ENCODE measurements at regions of chr3 and their contacts with region 1.

Region 1: DNA sequence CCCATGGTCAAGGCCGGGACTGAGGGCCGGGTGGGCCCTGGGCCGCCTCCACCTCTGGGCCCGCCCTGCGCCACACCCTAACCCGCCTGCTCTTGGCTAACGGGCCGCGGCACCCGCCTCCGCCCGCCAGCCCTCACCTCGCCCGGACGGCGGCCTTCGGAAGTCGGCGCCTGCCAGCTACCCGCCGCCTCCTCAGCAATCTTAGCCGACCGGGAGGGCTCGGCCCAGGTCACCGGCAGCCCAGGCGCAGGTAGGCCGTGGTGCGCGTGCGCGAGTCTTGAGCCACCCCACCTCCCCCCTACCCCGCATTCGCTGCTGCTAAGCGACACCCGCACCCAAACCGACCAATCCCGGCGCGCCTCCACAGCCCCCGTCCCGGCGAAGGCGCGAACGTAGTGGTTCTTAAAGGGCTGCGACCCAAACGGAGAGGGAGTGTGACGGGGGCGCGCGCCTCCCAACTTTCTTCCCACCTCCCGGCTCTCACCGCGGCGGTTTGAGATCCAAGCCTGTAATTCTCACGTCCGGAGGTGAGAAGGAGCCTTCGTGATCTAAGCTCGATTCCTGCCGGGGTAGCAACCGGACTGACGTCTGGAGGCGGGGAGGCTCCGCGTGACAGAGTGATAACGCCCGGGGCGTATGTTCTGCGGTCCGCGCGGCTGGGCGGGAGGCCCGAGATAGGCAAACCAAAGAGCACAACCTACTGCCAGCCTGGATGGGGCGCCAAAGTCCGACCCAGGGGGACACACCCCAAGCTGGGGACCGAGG is at the start of gene SEC22C:
- DNase-seq: peak; percentile 93
- H3K4me3 Mint-ChIP-seq: peak within 1 kb of the TSS; percentile 93
- H3K27ac Mint-ChIP-seq: peak within 1 kb of the TSS; percentile 90
- H3K4me1 Mint-ChIP-seq: peaks cover 47% of the 10 kb centered on the region
- H3K27me3 Mint-ChIP-seq: no peaks in the 10 kb centered on the region
- total RNA-seq, gene SEC22C: 36.1 and 40.1 TPM in 2 replicates

Region 2: DNA sequence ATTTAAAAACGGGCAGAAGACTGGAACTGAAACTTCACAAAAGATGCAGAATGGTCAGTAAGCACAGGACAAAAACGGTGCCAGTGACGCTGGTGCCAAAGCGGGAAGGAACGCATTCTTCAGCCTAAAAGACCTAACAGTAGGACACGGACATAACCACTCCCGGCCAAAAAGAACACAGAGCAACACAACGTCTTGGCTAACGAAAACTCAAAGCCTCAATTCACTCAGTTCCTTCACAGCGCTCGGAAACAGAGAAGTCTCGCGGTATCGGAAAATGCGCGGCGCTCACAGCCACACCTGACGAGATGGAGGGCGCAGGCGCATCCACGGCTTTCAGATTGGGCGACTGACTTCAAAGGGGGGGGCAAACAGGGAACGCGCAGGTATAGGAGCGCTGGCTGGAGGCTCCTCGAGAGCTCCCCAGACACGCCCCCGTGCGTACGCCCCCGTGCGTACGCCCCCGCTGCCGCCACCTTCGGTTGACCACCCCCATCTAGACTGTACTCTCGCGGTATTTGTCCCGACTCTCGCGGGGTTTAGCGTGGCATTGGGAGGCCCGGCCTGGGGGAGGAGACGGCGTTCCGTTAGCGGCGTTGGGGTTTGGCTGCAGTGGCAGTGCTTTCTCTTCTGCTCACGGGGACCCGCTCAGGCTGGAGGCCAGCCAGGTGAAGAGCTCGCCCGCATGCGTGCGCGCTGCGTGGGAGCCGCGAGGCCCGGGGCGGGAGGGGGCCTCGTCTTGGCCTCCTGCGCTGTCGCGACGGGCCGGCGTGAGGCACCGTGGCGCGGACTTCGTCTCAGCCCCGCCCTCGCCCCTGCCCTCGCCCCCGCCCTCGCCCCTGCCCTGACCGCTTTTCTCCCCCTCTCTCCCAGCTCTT is 18.5 kb after region 1 on chr3 and contains the start of gene NKTR:
- intact Hi-C with region 1: loop called (anchors 1 kb)
- DNase-seq: peak; percentile 99
- H3K4me3 Mint-ChIP-seq: peak within 1 kb of the TSS; percentile 91
- H3K27ac Mint-ChIP-seq: peak within 1 kb of the TSS; percentile 96
- H3K4me1 Mint-ChIP-seq: peaks cover 26% of the 10 kb centered on the region
- H3K27me3 Mint-ChIP-seq: no peaks in the 10 kb centered on the region
- total RNA-seq, gene NKTR: 76.6 and 86.2 TPM in 2 replicates

Region 3: DNA sequence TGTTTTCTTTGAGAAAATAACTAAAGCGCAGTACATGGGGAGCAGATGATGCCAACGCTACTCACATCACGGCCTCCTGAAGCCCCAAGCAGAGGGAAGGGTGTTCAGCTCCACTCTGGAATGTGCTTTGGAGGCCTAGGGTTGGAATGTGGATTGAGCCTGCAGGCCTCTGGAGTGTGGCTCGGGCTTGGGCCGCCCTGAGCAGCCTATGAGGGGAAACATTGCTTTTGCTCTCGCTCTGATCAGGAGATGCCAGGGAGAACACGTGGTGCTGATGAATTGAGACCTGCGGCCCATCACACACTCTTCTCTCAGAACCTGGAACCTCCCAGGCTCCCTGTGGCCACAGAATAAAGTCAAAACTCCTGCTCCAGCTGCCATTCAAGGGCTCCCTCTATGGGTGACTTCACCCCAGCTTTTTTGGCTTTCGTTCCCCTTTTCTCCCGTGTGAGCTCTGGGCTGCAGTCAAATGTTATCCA is 167.9 kb after region 1 on chr3:
- intact Hi-C with region 1: loop called (anchors 1 kb)
- DNase-seq: no peak
- H3K4me3 Mint-ChIP-seq: no peak overlapping the region
- H3K27ac Mint-ChIP-seq: no peak overlapping the region
- H3K4me1 Mint-ChIP-seq: peaks cover 14% of the 10 kb centered on the region
- H3K27me3 Mint-ChIP-seq: no peaks in the 10 kb centered on the region

Region 4: GRCh38 chr3:42772670-42773408 is 190.9 kb after region 1 on chr3 and contains the start of gene CCDC13:
- intact Hi-C with region 1: loop called (anchors 2 kb)
- DNase-seq: peak; percentile 85
- H3K4me3 Mint-ChIP-seq: peak within 1 kb of the TSS; percentile 86
- H3K27ac Mint-ChIP-seq: peak within 1 kb of the TSS; percentile 74
- H3K4me1 Mint-ChIP-seq: peaks cover 9% of the 10 kb centered on the region
- H3K27me3 Mint-ChIP-seq: peaks cover 9% of the 10 kb centered on the region
- total RNA-seq, gene CCDC13: 0.44 TPM in 1 of 2 replicates, not detected in the other